Vagina (tissue), 2 donors: ENCODE measurements at regions of chrX and their contacts with region 1.

Region 1: DNA sequence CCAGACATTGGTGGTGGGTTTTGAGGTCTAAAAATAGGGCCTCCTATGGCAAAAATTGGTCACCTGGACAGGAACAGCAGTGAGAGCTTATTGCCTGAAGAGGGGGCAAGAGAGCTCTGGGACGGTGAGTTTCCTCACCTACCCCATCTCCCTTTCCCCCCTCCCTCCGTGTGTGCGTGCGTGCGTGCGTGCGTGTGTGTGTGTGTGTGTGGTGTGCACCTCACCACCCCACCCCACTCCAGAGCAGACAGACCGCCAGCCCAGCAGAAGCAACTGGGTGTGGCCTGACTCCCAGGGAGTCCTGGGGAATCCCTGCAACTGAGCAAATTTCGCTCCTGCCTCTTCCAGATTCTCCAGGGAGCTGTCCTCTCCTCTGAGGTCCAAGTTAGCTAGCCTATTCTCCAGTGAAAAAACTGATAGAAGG is 44.7 kb downstream of the PRPS1 start:
- DNase-seq: no peak
- H3K4me3 ChIP-seq: no peak overlapping the region
- H3K27ac ChIP-seq: peak overlapping the region; percentile 88
- H3K4me1 ChIP-seq: peaks cover 23% of the 10 kb centered on the region
- H3K27me3 ChIP-seq: no peaks in the 10 kb centered on the region
- CTCF ChIP-seq: peak in 1 of 3 experiments; percentile 74
- POLR2A ChIP-seq: peak in 1 of 2 donors; percentile 25

Region 2: DNA sequence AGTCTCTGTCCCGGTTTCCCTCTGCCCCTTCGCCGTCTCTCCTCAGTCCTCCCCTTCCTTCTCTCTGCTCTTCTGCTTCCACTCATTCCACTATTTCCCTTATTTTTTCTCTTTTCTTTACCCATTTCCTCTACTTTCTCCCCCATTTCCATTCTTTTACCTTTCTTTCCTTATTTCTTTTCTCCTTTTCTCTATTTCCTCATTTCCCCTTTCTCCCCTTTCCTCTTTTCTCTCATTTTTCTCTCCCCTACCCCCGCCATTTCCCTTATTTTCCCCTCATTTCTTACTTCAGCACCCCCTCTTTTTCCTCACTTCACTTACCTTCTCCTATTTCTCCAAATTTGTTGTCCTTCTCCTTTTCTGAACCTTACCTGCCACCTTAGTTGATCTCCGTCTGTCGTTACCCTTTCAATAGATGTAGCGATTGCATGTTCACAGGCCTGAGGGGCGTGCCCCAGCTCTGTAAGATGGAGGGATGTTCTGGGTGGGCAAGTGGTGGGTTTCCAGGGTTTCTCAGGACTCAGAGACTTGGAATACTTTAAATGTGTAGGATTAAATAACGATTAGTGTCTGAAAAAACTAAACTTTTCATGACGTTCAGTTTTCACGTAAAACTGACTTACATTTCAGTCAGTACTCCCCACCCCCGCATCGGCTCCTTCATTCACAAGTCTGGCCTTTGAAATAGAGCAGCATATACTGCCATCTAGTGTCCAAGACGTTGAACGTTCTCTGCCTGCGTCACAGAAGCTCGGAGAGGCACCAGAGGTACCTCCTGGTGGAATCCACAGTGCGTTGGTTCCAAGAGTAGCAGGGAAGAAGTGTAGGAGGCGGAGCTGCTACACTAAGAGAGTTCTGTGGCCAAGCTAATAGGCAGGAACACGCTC is 103.9 kb after region 1 on chrX:
- intact Hi-C with region 1: loop called (anchors 5 kb)
- DNase-seq: no peak
- H3K4me3 ChIP-seq: peak overlapping the region; percentile 42 to 55
- H3K27ac ChIP-seq: peak overlapping the region; percentile 84
- H3K4me1 ChIP-seq: peaks cover 10% of the 10 kb centered on the region
- H3K27me3 ChIP-seq: no peaks in the 10 kb centered on the region
- CTCF ChIP-seq: peak; percentile 56 to 90 (median 59)
- POLR2A ChIP-seq: no peak